ENCODE measurements at regions of chr15 and their contacts with region 1.

Region 1: DNA sequence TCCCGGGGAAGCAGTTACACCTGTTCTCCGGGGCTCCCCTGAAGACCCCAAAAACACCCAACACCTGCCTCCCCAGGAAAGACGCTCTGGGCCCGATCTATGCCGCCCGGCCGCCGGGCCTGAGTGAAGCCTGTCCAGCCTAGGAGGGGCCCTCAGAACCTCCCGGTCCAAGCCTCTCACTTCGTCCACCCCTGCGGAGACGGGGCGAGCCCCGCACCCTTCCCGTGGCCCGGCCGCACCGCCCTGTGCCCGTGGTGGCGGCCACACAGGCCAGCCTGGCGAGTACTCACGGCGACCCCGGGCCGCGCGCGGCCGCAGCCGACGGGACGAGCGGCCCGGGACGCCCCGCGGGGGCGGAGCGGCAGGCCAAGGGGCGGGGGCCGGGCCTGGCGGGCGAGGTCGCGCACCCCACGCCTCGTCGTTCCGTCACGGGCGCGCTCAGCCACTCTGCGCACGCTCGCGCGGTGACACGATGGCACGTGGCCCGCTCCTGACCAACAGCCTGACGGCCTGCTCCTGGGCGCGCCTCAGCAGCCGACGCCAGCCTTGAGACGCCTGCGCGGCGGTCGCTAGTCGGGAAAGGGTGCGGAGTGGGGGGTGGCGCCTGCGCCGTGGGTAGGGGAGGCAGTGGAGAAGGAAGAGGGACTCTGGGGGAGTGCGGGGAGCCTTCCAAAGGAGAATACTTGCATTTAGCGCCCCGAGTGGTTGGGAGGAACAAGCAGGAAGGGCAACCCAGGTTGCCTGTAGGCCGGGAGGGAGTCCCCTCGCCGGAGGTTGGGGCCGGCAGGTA is at the start of gene PARP6:
- DNase-seq: peak; percentile 94
- H3K4me3 ChIP-seq: peak within 1 kb of the TSS; percentile 80
- H3K27ac ChIP-seq: peak within 1 kb of the TSS; percentile 67
- H3K4me1 ChIP-seq: peaks cover 7% of the 10 kb centered on the region
- H3K27me3 ChIP-seq: no peaks in the 10 kb centered on the region
- CTCF ChIP-seq: peak; percentile 43
- total RNA-seq, gene PARP6: 21.3 to 39.3 TPM

Region 2: DNA sequence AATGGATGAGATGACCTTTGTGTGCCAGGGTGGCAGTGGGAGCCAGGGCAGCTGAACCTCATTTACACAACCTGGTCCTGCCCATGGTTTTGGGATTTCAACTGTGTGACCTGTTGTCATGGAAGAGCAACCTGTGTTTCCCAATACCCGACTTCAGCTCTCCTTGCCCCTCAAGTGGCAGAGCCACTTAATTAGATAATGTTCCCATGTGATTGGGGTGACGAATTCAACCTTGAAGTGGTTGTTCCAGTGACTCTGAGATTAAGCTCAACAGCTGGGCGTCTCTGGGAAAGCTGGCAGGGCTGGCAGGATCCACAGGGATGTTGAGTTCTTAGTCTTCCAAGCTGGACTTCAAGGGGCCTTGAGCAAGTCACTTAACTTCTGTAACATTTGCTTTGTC is 1086.1 kb before region 1 on chr15:
- intact Hi-C with region 1: no loop called
- DNase-seq: no peak
- H3K4me3 ChIP-seq: no peak overlapping the region
- H3K27ac ChIP-seq: no peak overlapping the region
- H3K4me1 ChIP-seq: no peaks in the 10 kb centered on the region
- H3K27me3 ChIP-seq: no peaks in the 10 kb centered on the region
- CTCF ChIP-seq: no peak

Region 3: GRCh38 chr15:72199711-72200212 is 72.6 kb before region 1 on chr15:
- intact Hi-C with region 1: loop called (anchors 5 kb)
- DNase-seq: peak; percentile 88
- H3K4me3 ChIP-seq: no peak overlapping the region
- H3K27ac ChIP-seq: no peak overlapping the region
- H3K4me1 ChIP-seq: no peaks in the 10 kb centered on the region
- H3K27me3 ChIP-seq: peaks cover 4% of the 10 kb centered on the region
- CTCF ChIP-seq: peak; percentile 96

Region 4: GRCh38 chr15:72231066-72231846 is 41.2 kb before region 1 on chr15 and contains the start of gene PKM:
- intact Hi-C with region 1: loop called (anchors 5 kb)
- DNase-seq: peak; percentile 99
- H3K4me3 ChIP-seq: peak within 1 kb of the TSS; percentile 87
- H3K27ac ChIP-seq: peak within 1 kb of the TSS; percentile 99
- H3K4me1 ChIP-seq: peaks cover 21% of the 10 kb centered on the region
- H3K27me3 ChIP-seq: no peaks in the 10 kb centered on the region
- CTCF ChIP-seq: no peak
- total RNA-seq, gene PKM: 769 to 946 TPM